ENCODE measurements at regions of chr12 and their contacts with region 1.

Region 1: GRCh38 chr12:47561746-47562145 is 144.1 kb downstream of the RPAP3 start:
- DNase-seq: peak; percentile 66
- H3K4me3 ChIP-seq: no peak overlapping the region
- H3K27ac ChIP-seq: no peak overlapping the region
- H3K4me1 ChIP-seq: peaks cover 13% of the 10 kb centered on the region
- H3K27me3 ChIP-seq: no peaks in the 10 kb centered on the region
- CTCF ChIP-seq: no peak

Region 2: GRCh38 chr12:47610686-47611252 is 49.0 kb after region 1 on chr12:
- CTCF ChIA-PET with region 1: no interaction called
- dilution Hi-C with region 1: loop called (anchors 5 kb)
- in situ Hi-C with region 1: no loop called
- intact Hi-C with region 1: no loop called
- DNase-seq: no peak
- H3K4me3 ChIP-seq: no peak overlapping the region
- H3K27ac ChIP-seq: no peak overlapping the region
- H3K4me1 ChIP-seq: no peaks in the 10 kb centered on the region
- H3K27me3 ChIP-seq: no peaks in the 10 kb centered on the region
- CTCF ChIP-seq: no peak